Calu3 (cell line): ENCODE measurements at regions of chr14 and their contacts with region 1.

Region 1: GRCh38 chr14:58637391-58638230 is at the start of gene DACT1:
- DNase-seq: peak; percentile 30
- H3K4me3 Mint-ChIP-seq: peak within 1 kb of the TSS; percentile 75
- H3K27ac Mint-ChIP-seq: no peak within 1 kb of the TSS
- H3K4me1 Mint-ChIP-seq: no peaks in the 10 kb centered on the region
- H3K27me3 Mint-ChIP-seq: peaks cover 65% of the 10 kb centered on the region
- CTCF ChIP-seq: no peak
- total RNA-seq, gene DACT1: not detected in 2 replicates

Region 2: DNA sequence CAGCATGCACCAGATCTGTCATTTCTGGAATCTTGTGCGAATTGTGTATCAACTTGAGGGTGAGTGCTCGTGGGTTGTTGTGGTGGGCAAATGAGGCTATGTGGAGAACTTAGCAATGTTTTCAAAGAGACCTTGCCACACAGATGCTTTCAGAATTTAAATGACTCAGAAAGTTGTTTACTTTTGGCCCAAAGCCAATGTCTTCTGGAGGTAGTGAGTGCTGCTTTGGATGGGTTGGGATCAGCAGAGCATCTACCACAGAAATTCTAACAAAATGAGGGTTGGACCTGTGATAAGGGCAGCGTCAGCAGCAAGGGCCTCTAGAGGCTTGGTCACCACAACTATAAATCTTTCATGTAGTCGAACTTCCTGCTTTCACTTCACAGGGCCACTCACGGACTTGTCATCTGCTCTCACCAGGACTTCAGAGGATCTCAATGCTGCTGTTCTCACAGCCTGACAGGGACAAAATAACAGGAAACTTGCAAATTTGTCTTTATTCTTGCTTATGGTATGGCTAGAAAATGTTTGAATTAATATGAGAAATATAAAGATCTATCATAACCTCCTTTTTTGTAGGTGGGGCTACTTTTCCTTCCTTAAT is 111.6 kb after region 1 on chr14:
- CTCF ChIA-PET with region 1: no interaction called
- intact Hi-C with region 1: loop called (anchors 5 kb)
- DNase-seq: peak; percentile 25
- H3K4me3 Mint-ChIP-seq: no peak overlapping the region
- H3K27ac Mint-ChIP-seq: no peak overlapping the region
- H3K4me1 Mint-ChIP-seq: peaks cover 54% of the 10 kb centered on the region
- H3K27me3 Mint-ChIP-seq: peaks cover 14% of the 10 kb centered on the region
- CTCF ChIP-seq: no peak

Region 3: DNA sequence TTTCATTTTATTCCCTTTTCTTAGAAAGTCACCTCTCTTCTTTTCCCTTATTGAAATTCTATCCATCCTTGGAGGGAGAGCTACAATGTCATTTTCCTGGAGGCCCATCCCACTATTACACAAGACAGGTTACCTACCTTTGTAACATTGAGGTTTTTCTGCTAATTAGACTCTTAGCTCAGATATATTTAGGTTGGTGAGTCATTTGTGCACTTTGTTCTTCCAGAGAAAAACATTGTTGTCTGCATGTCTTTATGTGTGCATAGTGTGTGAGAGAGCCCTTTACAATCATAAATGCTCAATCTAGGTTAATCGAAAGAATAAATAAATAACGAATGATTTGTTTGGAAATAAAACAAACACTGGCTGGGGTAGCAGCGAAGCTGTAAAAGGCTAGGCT is 192.0 kb after region 1 on chr14:
- CTCF ChIA-PET with region 1: interaction called, 6 read pairs
- intact Hi-C with region 1: loop called (anchors 2 kb)
- DNase-seq: peak; percentile 32
- H3K4me3 Mint-ChIP-seq: peak overlapping the region; percentile 5
- H3K27ac Mint-ChIP-seq: peak overlapping the region; percentile 8
- H3K4me1 Mint-ChIP-seq: peaks cover 25% of the 10 kb centered on the region
- H3K27me3 Mint-ChIP-seq: no peaks in the 10 kb centered on the region
- CTCF ChIP-seq: no peak

Region 4: DNA sequence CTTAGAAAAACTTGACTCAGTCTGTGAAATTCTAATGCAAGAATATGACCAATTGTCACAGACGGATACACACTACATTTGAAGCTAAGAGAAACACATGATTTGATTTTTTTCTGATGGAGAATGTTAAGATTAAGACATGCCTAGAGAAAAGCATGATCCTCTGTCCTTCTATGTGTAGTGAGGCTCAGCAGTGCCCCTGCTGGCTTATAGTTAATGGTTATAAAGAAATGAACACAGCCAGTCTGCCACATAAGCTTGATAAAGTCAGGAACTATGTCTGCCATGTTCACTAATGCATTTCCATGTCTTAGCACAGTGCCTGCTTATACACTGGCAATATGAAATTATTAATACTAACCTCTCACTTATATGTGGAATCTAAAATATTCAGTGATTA is 382.8 kb after region 1 on chr14:
- CTCF ChIA-PET with region 1: no interaction called
- intact Hi-C with region 1: loop called (anchors 1 kb)
- DNase-seq: peak; percentile 38
- H3K4me3 Mint-ChIP-seq: no peak overlapping the region
- H3K27ac Mint-ChIP-seq: no peak overlapping the region
- H3K4me1 Mint-ChIP-seq: no peaks in the 10 kb centered on the region
- H3K27me3 Mint-ChIP-seq: no peaks in the 10 kb centered on the region
- CTCF ChIP-seq: peak; percentile 22